ENCODE measurements at regions of chr2 and their contacts with region 1.

Region 1: DNA sequence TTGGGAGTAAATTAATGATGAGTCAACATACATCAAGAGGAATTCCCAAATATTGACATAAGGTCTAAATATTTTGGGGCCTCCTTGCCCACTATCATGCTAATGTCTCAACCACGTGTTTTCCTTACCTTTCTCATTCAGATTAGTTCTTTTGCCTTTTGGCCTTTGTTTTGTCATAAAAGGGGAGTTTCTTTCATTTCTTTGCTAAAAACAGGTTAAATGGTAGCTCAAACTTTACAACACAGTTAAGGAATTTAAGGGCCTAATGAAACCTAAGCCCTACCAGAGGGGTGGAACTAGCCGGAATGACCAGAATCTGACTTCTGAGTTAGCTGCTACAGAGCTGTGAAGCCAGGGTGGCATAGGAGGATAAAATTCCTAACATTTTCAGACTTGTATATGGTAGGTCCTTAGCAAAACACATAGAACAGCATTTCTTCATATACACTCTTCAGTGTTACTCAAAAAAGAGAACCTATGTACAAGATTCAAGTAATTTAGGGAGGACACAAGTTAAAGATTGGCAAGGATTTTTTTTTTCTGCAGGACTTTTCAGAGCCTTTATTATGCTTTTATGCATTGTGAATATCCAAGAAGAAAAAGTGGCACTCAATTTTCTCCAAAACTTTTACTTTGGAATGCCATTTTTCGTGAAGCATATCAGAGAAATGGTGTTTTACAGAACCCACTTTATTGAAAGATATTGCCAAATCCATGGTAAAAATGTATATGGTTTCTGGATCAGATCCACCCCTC is 633.1 kb downstream of the ARHGAP15 start:
- DNase-seq: peak in 1 of 2 experiments; percentile 16
- H3K4me3 ChIP-seq: no peak overlapping the region
- H3K4me3 Mint-ChIP-seq: peak overlapping the region; percentile 22
- H3K27ac Mint-ChIP-seq: peak overlapping the region; percentile 58
- H3K4me1 ChIP-seq: peaks cover 23% of the 10 kb centered on the region
- H3K4me1 Mint-ChIP-seq: peaks cover 7% of the 10 kb centered on the region
- H3K27me3 ChIP-seq: no peaks in the 10 kb centered on the region
- H3K27me3 Mint-ChIP-seq: no peaks in the 10 kb centered on the region
- CTCF ChIP-seq: no peak

Region 2: DNA sequence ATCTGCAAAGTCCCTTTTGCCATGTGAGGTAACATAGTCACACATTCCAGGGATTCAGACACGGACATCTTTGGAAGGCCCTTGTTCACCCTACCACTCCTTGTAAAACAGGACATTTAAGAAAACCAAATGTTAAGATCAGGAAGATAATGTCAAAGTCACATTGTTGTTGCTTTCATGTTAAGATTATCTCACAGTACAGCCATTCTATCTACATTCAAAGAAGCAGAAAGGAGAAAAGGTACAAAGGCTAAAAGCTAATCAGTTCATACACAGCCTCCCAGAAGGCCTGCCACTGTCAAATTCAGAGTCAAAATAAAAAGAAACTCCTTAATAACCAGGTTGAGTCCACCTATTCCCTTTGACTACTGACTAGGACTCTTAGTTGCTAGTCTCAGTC is 59.4 kb before region 1 on chr2:
- CTCF ChIA-PET with region 1: no interaction called
- POLR2A ChIA-PET with region 1: no interaction called
- intact Hi-C with region 1: loop called (anchors 2 kb)
- DNase-seq: no peak
- H3K4me3 ChIP-seq: no peak overlapping the region
- H3K4me3 Mint-ChIP-seq: no peak overlapping the region
- H3K27ac Mint-ChIP-seq: peak overlapping the region; percentile 19
- H3K4me1 ChIP-seq: peaks cover 17% of the 10 kb centered on the region
- H3K4me1 Mint-ChIP-seq: peaks cover 22% of the 10 kb centered on the region
- H3K27me3 ChIP-seq: no peaks in the 10 kb centered on the region
- H3K27me3 Mint-ChIP-seq: no peaks in the 10 kb centered on the region
- CTCF ChIP-seq: no peak

Measured in Caco-2 (cell line).